Heart left ventricle (tissue), 16 donors: ENCODE measurements at regions of chr9 and their contacts with region 1.

Region 1: DNA sequence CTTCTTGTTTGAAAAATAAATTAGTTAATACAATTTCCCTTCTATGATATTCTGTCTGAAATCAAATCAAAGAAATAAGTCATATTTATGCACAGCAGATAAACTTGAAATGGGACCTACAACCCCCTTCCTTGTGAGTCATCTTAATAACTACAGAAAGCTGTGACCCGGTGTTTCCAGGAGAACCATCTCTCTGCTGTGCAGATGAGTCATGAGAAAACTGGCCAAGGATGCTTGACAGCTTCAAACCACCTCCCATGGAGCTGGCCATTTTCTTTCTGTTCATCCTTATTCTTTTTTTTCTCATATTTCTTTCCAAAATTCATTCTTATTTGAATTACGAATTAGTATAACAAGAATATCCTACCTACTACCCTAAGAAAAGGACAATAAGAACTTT is 43.4 kb upstream of the NR4A3 start:
- DNase-seq: no peak
- ATAC-seq: no peak
- H3K4me3 ChIP-seq: no peak overlapping the region
- H3K27ac ChIP-seq: no peak overlapping the region
- H3K4me1 ChIP-seq: no peaks in the 10 kb centered on the region
- H3K27me3 ChIP-seq: no peaks in the 10 kb centered on the region
- CTCF ChIP-seq: no peak
- POLR2A ChIP-seq: no peak

Region 2: DNA sequence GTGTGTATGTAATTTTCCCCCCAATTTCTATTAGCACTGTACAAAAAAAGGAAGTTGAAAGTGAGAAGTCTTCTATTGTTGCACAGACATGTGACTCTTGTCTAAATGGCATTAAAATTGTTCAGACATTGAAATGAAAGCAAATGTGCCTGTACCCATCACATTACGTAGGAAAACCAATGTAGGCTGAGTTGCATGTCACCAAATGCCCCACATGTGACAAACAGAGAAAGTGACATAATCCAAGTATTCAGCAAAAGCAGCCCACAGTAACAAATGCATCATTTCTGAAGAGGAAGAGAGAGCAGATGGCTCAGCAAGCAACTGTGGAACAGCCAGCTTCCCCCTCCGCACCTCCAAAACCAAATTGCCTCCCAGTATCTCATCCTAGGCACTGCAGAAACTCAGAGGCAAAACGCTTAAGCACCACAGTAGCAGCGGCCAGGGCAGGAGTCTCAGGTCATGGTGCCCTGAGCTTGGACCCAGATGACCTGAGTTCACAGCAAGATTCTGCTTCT is 118.1 kb before region 1 on chr9:
- intact Hi-C with region 1: loop called in 2 of 10 experiments (anchors 10 kb)
- DNase-seq: peak in 1 of 5 donors; percentile 12
- ATAC-seq: peak in 3 of 4 donors; percentile 32 to 73 (median 48)
- H3K4me3 ChIP-seq: no peak overlapping the region
- H3K27ac ChIP-seq: peak overlapping the region in 1 of 12 donors; percentile 47
- H3K4me1 ChIP-seq: peaks cover 0 to 7% (median 0%) of the 10 kb centered on the region in 12 donors
- H3K27me3 ChIP-seq: no peaks in the 10 kb centered on the region
- CTCF ChIP-seq: no peak
- POLR2A ChIP-seq: no peak